ENCODE measurements at regions of chr3 and their contacts with region 1.

Region 1: GRCh38 chr3:187025656-187026316 is 95.5 kb downstream of the ST6GAL1 start:
- DNase-seq: peak; percentile 47
- H3K4me3 Mint-ChIP-seq: peak overlapping the region; percentile 73
- H3K27ac Mint-ChIP-seq: peak overlapping the region; percentile 88
- H3K4me1 Mint-ChIP-seq: peaks cover 72% of the 10 kb centered on the region
- H3K27me3 Mint-ChIP-seq: no peaks in the 10 kb centered on the region

Region 2: DNA sequence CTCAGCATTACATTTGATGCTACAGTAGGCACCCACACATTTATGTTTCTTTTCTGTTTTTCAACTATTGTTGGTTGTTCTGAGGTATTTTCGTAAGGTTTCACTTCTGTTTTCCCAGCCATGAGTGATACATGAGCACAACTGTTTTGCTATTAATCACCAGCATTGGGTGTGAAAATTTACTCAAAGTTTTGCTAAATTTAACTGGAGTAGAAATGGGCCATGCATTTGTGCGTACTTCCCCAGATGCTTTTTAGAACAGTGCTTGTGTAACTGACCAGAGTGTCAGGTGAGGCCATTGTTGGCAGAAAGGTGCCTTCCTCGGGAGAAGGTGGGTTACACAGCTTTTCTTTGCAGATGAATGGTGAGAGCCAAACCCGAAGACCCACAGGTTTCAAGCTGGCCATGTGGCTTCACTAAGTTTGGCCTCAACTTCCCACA is 25.1 kb before region 1 on chr3:
- CTCF ChIA-PET with region 1: interaction called, 7 read pairs
- POLR2A ChIA-PET with region 1: interaction called, 26 read pairs
- DNase-seq: peak; percentile 33
- H3K4me3 Mint-ChIP-seq: peak overlapping the region; percentile 45
- H3K27ac Mint-ChIP-seq: peak overlapping the region; percentile 86
- H3K4me1 Mint-ChIP-seq: peaks cover 65% of the 10 kb centered on the region
- H3K27me3 Mint-ChIP-seq: no peaks in the 10 kb centered on the region

Region 3: GRCh38 chr3:187006864-187007630 is 18.7 kb before region 1 on chr3:
- CTCF ChIA-PET with region 1: interaction called, 7 read pairs
- POLR2A ChIA-PET with region 1: interaction called, 27 read pairs
- DNase-seq: no peak
- H3K4me3 Mint-ChIP-seq: peak overlapping the region; percentile 3
- H3K27ac Mint-ChIP-seq: peak overlapping the region; percentile 71
- H3K4me1 Mint-ChIP-seq: peaks cover 68% of the 10 kb centered on the region
- H3K27me3 Mint-ChIP-seq: no peaks in the 10 kb centered on the region

Region 4: DNA sequence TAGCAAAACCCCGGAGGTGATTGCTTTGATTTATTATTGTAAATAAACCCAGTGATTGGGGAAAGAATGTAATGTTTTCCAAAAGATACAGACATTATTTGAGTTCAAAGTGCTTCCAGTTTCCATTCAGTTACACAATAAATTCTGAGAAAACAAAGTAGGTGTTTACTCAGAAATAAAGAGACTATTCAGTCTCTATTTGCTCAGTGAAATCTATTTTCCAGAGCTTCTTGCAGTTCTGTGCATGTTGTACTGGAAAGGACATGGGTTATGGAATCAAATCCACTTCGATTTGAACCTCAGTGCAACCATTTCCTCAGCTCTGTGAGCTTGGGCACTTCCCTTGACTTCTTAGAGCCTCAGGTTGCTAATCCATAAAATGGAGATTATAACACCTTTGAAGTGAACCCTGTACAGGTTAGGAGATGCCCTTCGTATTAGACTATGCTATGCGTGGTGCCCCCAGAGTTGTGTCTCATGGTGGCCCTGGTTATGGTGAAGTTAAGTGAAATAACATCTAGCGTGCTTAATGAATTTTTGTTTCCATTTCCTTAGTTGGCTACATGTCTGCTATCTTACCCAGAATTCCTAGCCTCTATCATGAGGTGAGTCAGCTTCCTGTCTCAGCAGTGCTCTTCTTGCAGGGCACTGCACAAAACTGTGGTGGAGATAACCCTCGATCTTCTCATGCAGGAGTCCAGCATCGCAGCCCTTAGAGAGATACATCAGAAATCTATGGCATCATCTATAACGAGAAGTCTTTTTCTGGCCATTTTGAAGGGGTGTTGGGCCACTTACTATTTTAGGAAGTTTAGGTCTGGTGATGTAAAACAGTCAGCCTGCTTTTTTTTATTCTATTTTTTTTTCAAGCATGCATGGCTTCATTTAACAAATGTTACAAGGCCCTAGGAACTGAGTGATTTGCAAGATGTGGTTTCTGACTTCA is 15.8 kb after region 1 on chr3:
- CTCF ChIA-PET with region 1: interaction called, 8 read pairs
- POLR2A ChIA-PET with region 1: interaction called, 108 read pairs
- DNase-seq: peak; percentile 74
- H3K4me3 Mint-ChIP-seq: peak overlapping the region; percentile 50
- H3K27ac Mint-ChIP-seq: peak overlapping the region; percentile 98
- H3K4me1 Mint-ChIP-seq: peaks cover 80% of the 10 kb centered on the region
- H3K27me3 Mint-ChIP-seq: no peaks in the 10 kb centered on the region

Region 5: DNA sequence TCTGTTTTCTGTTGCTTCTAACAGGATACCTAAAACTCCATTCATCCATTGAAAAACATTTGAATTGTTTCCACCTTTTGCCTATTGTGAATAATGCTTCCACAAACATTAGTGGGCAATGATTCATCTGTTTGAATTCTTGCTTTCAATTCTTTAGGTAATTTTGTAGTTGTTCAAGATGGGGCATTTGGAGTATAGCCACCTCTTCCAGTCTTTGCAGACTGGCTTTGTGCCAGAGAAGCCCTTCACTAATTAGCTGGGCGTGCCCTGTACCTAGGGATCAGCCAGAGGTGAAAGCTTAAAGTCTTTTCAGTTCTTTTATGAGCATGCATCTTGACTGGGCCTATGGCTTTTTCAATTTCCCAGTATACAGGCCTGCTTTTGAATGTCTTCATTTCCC is 182.4 kb after region 1 on chr3:
- CTCF ChIA-PET with region 1: no interaction called
- POLR2A ChIA-PET with region 1: no interaction called
- DNase-seq: no peak
- H3K4me3 Mint-ChIP-seq: no peak overlapping the region
- H3K27ac Mint-ChIP-seq: no peak overlapping the region
- H3K4me1 Mint-ChIP-seq: no peaks in the 10 kb centered on the region
- H3K27me3 Mint-ChIP-seq: peaks cover 15% of the 10 kb centered on the region

Measured in activated CD4-positive, alpha-beta memory T cell treated with anti-CD3 and anti-CD28 coated beads, Interleukin-2, amount 10 ng/mL, durations not matched to agents 7 days and 5 days (primary cell).